Activated naive CD4-positive, alpha-beta T cell treated with anti-CD3 and anti-CD28 coated beads for 36 hours (primary cell): ENCODE measurements at regions of chr10 and their contacts with region 1.

Region 1: GRCh38 chr10:93904901-93905300 is 11.1 kb downstream of the SLC35G1 start:
- DNase-seq: no peak
- H3K4me3 Mint-ChIP-seq: no peak overlapping the region
- H3K27ac Mint-ChIP-seq: no peak overlapping the region
- H3K4me1 Mint-ChIP-seq: peaks cover 19% of the 10 kb centered on the region
- H3K27me3 Mint-ChIP-seq: no peaks in the 10 kb centered on the region

Region 2: GRCh38 chr10:93916257-93917063 is 11.6 kb after region 1 on chr10:
- CTCF ChIA-PET with region 1: interaction called, 12 read pairs
- intact Hi-C with region 1: no loop called
- DNase-seq: no peak
- H3K4me3 Mint-ChIP-seq: no peak overlapping the region
- H3K27ac Mint-ChIP-seq: no peak overlapping the region
- H3K4me1 Mint-ChIP-seq: no peaks in the 10 kb centered on the region
- H3K27me3 Mint-ChIP-seq: no peaks in the 10 kb centered on the region